ENCODE measurements at regions of chr17 and their contacts with region 1.

Region 1: GRCh38 chr17:64145757-64146417 is 15.9 kb upstream of the ERN1 start:
- DNase-seq: peak; percentile 93 to 98
- H3K4me3 ChIP-seq: peak overlapping the region; percentile 93
- H3K27ac ChIP-seq: peak overlapping the region; percentile 90
- H3K4me1 ChIP-seq: peaks cover 31% of the 10 kb centered on the region
- H3K27me3 ChIP-seq: no peaks in the 10 kb centered on the region
- CTCF ChIP-seq: no peak

Region 2: GRCh38 chr17:63881876-63882601 is 263.8 kb before region 1 on chr17 and contains the start of gene GH2:
- CTCF ChIA-PET with region 1: no interaction called
- POLR2A ChIA-PET with region 1: interaction called, 11 read pairs
- intact Hi-C with region 1: no loop called
- DNase-seq: peak; percentile 40 to 58
- H3K4me3 ChIP-seq: no peak within 1 kb of the TSS
- H3K27ac ChIP-seq: no peak within 1 kb of the TSS
- H3K4me1 ChIP-seq: no peaks in the 10 kb centered on the region
- H3K27me3 ChIP-seq: peaks cover 5% of the 10 kb centered on the region; the same call in 1 of the 2 replicates
- CTCF ChIP-seq: peak; percentile 77
- total RNA-seq, gene GH2: not detected in 2 replicates

Region 3: GRCh38 chr17:64202675-64203344 is 56.9 kb after region 1 on chr17:
- CTCF ChIA-PET with region 1: interaction called, 4 read pairs
- POLR2A ChIA-PET with region 1: interaction called, 13 read pairs
- intact Hi-C with region 1: loop called (anchors 5 kb)
- DNase-seq: peak; percentile 54 to 84
- H3K4me3 ChIP-seq: no peak overlapping the region
- H3K27ac ChIP-seq: no peak overlapping the region
- H3K4me1 ChIP-seq: peaks cover 11% of the 10 kb centered on the region
- H3K27me3 ChIP-seq: no peaks in the 10 kb centered on the region
- CTCF ChIP-seq: no peak

Region 4: DNA sequence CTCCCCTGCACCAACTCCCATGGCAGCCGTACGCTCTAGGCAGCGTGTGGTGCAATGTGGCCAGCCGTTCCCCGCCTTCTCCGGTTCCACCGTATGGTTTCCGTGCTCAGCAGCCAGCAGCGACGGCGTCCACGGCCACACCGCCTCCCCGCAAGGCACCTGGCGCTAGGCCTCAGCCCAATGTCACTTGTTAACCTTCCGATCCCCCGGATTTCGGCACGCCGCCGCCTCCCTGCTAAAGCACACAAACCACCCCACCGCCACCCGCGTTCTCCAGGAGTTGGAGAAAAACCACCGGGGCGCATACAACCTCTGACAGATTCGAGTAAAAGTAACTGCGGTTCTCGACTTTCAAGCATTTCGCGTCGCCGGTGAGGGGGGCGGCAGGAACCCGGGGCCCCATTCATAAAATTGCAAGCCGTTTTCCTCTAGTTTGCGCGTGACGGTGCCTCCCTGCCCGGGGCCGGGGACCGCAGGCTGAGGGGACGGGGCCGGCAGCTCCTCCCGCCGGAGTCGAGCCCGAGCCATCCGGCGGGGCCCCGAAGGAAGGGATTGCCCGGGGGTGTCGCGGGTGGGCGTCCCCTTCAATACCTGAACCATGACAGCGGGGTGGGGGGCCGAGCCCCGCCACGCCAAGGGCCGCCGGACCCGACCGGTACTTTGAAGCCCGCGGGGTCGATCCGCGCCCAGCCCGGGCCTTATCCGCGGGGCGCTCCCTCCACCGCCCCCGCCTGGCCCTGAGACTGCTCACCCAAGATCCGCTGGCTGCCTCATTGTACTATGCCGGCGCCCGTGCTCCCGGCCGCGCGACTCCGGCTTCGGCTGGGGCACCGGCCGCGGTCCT is 116.8 kb after region 1 on chr17 and contains the start of gene TEX2:
- CTCF ChIA-PET with region 1: no interaction called
- POLR2A ChIA-PET with region 1: interaction called, 18 read pairs
- intact Hi-C with region 1: loop called (anchors 1 kb)
- DNase-seq: peak in 1 of 2 experiments; percentile 31
- H3K4me3 ChIP-seq: peak within 1 kb of the TSS; percentile 71
- H3K27ac ChIP-seq: peak within 1 kb of the TSS; percentile 18; the same call in 1 of the 2 replicates
- H3K4me1 ChIP-seq: peaks cover 26% of the 10 kb centered on the region
- H3K27me3 ChIP-seq: 0 out of 2 replicates have a peak, but pooled peaks cover 9% of the 10 kb centered on the region
- CTCF ChIP-seq: no peak
- total RNA-seq, gene TEX2: 24.0 and 27.9 TPM in 2 replicates

Region 5: GRCh38 chr17:64377769-64378282 is 231.9 kb after region 1 on chr17:
- CTCF ChIA-PET with region 1: no interaction called
- POLR2A ChIA-PET with region 1: interaction called, 21 read pairs
- intact Hi-C with region 1: no loop called
- DNase-seq: peak in 1 of 2 experiments; percentile 77
- H3K4me3 ChIP-seq: peak overlapping the region; percentile 47; the same call in 1 of the 2 replicates
- H3K27ac ChIP-seq: peak overlapping the region; percentile 81
- H3K4me1 ChIP-seq: peaks cover 80% of the 10 kb centered on the region
- H3K27me3 ChIP-seq: no peaks in the 10 kb centered on the region
- CTCF ChIP-seq: no peak

Region 6: DNA sequence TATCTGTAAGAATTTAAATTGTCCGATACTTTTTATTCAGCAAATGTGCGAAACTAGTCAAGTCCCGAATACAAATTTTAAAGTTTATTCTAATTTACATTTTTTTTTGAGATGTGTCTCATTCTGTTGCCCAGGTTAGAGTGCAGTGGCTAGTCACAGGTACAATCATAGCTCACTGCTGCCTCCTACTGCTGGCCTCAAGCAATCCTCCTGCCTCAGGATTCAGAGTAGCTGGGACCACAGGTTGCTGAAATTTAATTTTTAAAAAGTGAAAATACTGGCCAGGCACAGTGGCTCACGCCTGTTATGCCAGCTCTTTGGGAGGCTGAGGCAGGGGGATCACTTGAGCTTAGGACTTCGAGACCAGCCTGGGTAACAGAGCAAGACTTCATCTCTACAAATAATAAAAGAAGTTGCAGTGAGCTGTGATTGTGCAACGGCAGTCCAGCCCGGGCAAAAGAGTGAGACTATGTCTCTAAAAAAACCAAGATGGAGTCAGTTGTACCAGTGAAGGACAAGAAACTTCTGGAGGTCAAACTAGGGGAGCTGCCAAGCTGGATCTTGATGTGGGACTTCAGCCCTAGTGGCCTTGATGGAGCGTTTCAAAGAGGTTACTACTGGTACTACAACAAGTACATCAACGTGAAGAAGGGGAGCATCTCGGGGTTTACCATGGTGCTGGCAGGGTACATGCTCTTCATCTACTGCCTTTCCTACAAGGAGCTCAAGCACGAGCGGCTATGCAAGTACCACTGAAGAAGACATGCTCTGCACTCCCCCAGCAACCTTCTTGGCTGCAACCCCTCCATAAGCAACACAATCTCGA is 345.4 kb after region 1 on chr17:
- CTCF ChIA-PET with region 1: no interaction called
- POLR2A ChIA-PET with region 1: no interaction called
- intact Hi-C with region 1: loop called (anchors 5 kb)
- DNase-seq: peak; percentile 25 to 53
- H3K4me3 ChIP-seq: no peak overlapping the region
- H3K27ac ChIP-seq: no peak overlapping the region
- H3K4me1 ChIP-seq: peaks cover 27% of the 10 kb centered on the region
- H3K27me3 ChIP-seq: no peaks in the 10 kb centered on the region
- CTCF ChIP-seq: peak; percentile 84

Region 7: DNA sequence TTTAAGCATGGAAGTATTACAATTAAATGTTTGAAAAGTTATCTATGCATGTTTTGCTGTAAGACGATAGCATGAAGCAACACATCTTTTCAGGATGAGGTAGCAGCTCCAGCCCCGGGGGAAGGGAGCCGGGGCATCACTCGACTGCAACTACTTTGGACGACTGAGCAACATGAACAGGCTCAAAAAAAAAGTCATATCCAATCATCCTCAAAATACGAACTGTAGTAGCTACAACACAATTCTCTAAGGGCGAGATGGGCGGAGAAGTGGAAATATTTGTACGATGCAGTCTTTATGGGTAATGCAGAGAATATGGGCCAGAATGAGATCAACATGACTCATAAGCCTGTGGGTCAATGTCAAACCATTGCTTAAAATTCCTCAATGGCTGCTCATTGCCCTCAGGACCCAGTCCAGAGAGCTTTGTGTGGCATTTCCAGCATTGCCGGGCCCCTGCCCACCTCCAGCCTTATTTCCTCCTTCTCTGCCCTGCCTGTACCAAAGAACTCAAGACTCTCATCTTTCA is 533.9 kb after region 1 on chr17:
- CTCF ChIA-PET with region 1: no interaction called
- POLR2A ChIA-PET with region 1: no interaction called
- intact Hi-C with region 1: no loop called
- DNase-seq: peak; percentile 81 to 98
- H3K4me3 ChIP-seq: peak overlapping the region; percentile 42; the same call in 1 of the 2 replicates
- H3K27ac ChIP-seq: peak overlapping the region; percentile 96
- H3K4me1 ChIP-seq: peaks cover 57% of the 10 kb centered on the region
- H3K27me3 ChIP-seq: no peaks in the 10 kb centered on the region
- CTCF ChIP-seq: no peak